Naive thymus-derived CD4-positive, alpha-beta T cell (primary cell): ENCODE measurements at regions of chr5 and their contacts with region 1.

Region 1: DNA sequence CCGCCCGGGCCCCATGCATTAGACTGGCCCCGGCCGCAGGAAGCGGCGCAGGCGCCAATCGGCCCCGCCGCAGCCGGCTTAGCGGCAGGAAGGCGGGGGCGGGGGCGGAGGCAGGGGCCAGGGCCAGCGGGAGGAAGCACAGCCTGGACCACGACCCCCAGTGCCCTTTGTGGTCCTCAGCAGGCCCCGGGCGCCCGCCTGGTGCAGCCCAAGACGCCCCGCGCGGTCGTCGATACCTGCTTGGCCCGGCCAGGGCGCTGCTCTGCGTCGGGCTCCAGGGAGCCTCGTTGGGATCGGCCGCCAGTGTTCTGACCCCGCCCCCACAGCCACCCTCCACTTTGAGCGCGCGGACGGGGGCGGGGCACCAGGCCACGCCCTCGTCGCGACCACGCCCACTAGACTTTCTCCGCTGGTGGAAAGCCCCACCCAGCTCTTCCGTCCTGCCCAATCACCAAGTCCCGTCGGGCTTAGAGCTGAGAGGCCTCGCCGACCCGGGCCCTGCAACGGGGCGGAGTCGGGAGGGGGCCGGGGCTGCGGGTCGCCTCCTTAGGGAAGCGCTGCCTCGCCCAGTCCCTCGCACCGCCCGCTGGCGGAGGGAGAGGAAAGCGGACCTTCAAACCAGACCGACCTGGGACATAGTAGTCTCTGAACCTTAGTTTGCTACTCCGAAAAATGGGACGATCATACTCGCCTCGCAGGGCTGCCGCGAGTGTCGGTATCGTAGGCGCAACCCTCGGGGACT is at the start of gene PDLIM7:
- DNase-seq: peak; percentile 88 to 97 (median 92)
- ATAC-seq: peak; percentile 92
- H3K4me3 ChIP-seq: peak within 1 kb of the TSS; percentile 77
- H3K4me3 Mint-ChIP-seq: peak within 1 kb of the TSS; percentile 77 to 90 (median 84)
- H3K27ac ChIP-seq: peak within 1 kb of the TSS; percentile 61
- H3K27ac Mint-ChIP-seq: peak within 1 kb of the TSS; percentile 28 to 77 (median 66)
- H3K4me1 ChIP-seq: peaks cover 7 to 10% of the 10 kb centered on the region in 2 donors
- H3K4me1 Mint-ChIP-seq: peaks cover 24 to 44% (median 28%) of the 10 kb centered on the region in 7 donors
- H3K27me3 ChIP-seq: no peaks in the 10 kb centered on the region
- H3K27me3 Mint-ChIP-seq: peaks cover 0 to 24% (median 0%) of the 10 kb centered on the region in 5 donors
- total RNA-seq, gene PDLIM7: 4.1 to 63.2 (median 11.9) TPM

Region 2: GRCh38 chr5:177133091-177133852 is 364.2 kb before region 1 on chr5 and contains the start of gene NSD1:
- CTCF ChIA-PET with region 1: no interaction called
- POLR2A ChIA-PET with region 1: no interaction called
- intact Hi-C with region 1: loop called in 1 of 2 experiments (anchors 5 kb)
- DNase-seq: peak; percentile 86 to 94 (median 93)
- ATAC-seq: peak; percentile 89
- H3K4me3 ChIP-seq: peak within 1 kb of the TSS; percentile 61
- H3K4me3 Mint-ChIP-seq: peak within 1 kb of the TSS; percentile 60 to 88 (median 85)
- H3K27ac ChIP-seq: peak within 1 kb of the TSS; percentile 80
- H3K27ac Mint-ChIP-seq: peak within 1 kb of the TSS; percentile 48 to 95 (median 89)
- H3K4me1 ChIP-seq: peaks cover 47 to 57% of the 10 kb centered on the region in 2 donors
- H3K4me1 Mint-ChIP-seq: peaks cover 34 to 72% (median 65%) of the 10 kb centered on the region in 7 donors
- H3K27me3 ChIP-seq: no peaks in the 10 kb centered on the region
- H3K27me3 Mint-ChIP-seq: no peaks in the 10 kb centered on the region
- total RNA-seq, gene NSD1: 105 to 126 (median 117) TPM

Region 3: GRCh38 chr5:177317959-177318377 is 179.5 kb before region 1 on chr5:
- CTCF ChIA-PET with region 1: interaction called, 8 read pairs
- POLR2A ChIA-PET with region 1: no interaction called
- intact Hi-C with region 1: loop called (anchors 1 kb)
- DNase-seq: peak; percentile 41 to 73 (median 69)
- ATAC-seq: peak; percentile 84
- H3K4me3 ChIP-seq: no peak overlapping the region
- H3K4me3 Mint-ChIP-seq: no peak overlapping the region
- H3K27ac ChIP-seq: no peak overlapping the region
- H3K27ac Mint-ChIP-seq: peak overlapping the region in 2 of 9 donors; percentile 32 to 37
- H3K4me1 ChIP-seq: peaks cover 1% of the 10 kb centered on the region in 2 donors
- H3K4me1 Mint-ChIP-seq: peaks cover 0 to 49% (median 20%) of the 10 kb centered on the region in 7 donors
- H3K27me3 ChIP-seq: no peaks in the 10 kb centered on the region
- H3K27me3 Mint-ChIP-seq: no peaks in the 10 kb centered on the region

Region 4: DNA sequence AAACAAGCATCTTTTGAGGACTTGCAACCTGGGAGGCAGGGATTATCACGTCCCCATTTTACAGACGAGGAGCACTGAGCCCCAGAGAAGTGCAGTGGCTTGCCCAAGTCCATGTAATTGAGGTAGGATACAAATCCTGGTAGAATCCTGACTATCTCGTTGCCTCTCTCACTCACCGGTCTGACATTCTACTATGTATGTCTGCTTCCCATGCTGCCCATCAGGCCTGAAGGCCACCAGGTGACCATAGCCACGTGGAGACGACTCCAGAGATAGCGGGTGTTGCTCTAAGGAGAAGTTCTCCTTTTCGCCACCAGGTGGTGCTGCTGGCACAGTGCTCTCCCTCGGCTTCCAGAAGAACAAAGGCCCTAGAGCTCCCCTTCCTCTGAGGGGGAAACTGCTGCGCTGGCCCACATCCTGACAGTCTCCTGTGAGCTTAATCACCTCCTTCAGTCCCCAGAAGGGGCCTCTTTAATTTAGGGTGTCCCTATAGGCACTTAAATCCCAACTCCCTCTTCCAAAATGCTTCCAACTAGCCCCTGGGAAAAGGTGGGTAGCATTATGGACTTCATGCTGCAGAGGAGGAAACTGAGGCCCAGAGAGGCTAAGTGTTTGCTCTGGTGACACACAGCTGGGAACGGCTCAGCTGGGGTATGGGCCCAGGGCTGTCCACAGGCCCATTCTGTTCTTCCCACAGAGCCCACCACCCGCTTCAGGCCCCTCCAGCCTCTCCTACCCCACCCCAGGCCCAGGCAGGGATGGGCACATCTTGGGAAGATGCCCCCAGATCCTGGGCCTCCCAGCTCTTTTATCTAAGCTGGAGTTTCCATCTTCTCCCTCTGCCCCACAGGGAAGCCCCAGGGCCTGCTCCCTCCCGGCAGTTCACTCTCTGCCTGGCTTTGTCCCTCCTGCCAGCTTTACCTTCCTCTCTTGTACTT is 106.8 kb before region 1 on chr5:
- CTCF ChIA-PET with region 1: interaction called, 77 read pairs
- POLR2A ChIA-PET with region 1: interaction called, 12 read pairs
- intact Hi-C with region 1: loop called (anchors 1 kb)
- DNase-seq: peak; percentile 76 to 91 (median 88)
- ATAC-seq: peak; percentile 89
- H3K4me3 ChIP-seq: no peak overlapping the region
- H3K4me3 Mint-ChIP-seq: peak overlapping the region in 9 of 10 donors; percentile 29 to 68 (median 53)
- H3K27ac ChIP-seq: peak overlapping the region; percentile 63
- H3K27ac Mint-ChIP-seq: peak overlapping the region in 8 of 9 donors; percentile 65 to 86 (median 78)
- H3K4me1 ChIP-seq: peaks cover 31 to 33% of the 10 kb centered on the region in 2 donors
- H3K4me1 Mint-ChIP-seq: peaks cover 30 to 39% (median 34%) of the 10 kb centered on the region in 7 donors
- H3K27me3 ChIP-seq: no peaks in the 10 kb centered on the region
- H3K27me3 Mint-ChIP-seq: peaks cover 0 to 6% (median 0%) of the 10 kb centered on the region in 5 donors

Region 5: DNA sequence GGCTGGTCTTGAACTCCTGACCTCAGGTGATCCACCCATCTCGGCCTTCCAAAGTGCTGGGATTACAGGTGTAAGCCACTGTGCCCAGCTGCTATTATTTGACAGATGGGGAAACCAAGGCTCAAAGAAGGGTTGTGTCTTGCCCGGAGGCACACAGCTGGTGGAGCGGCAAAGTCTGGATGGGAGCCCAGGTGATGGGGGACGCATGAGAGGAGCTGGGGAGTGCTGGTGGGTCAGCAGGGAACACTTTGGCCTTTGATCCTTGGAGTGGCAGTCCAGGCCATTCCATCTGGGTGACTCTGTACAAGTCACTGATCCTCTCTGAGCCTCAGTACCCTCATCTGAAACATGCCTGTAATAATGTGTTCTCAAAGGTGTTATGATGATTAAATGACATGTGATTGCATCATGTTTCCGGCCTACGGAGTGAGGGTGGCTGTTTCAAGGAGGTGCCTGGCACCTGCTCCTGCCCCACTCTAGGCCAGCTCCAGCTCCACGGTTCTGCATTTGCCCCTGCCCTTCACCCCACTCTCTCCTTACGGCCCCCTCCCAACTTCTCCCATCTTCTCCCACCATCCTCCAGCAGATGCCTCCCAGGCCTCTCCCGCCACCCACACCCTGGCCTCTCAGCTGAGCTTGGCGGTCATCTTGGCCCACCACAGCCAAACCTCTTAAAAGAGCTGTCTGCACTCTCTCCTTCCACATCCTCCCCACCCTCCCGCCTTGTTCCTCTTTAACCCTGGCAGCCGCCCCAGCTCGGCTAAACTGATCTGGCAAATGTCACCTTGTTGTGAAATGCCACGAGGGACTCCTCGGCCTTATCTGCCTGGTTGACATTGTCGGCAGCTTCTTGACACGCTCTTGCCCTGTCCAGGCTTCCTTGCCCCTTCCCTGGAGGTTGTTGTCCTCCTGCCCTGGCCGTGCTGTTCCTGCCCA is 18.5 kb before region 1 on chr5:
- CTCF ChIA-PET with region 1: interaction called, 7 read pairs
- POLR2A ChIA-PET with region 1: interaction called, 5 read pairs
- intact Hi-C with region 1: loop called in 1 of 2 experiments (anchors 1 kb)
- DNase-seq: peak in 5 of 9 donors; percentile 26 to 48 (median 33)
- ATAC-seq: peak; percentile 80
- H3K4me3 ChIP-seq: no peak overlapping the region
- H3K4me3 Mint-ChIP-seq: peak overlapping the region in 8 of 10 donors; percentile 7 to 62 (median 32)
- H3K27ac ChIP-seq: peak overlapping the region; percentile 41
- H3K27ac Mint-ChIP-seq: peak overlapping the region; percentile 82 to 95 (median 90)
- H3K4me1 ChIP-seq: peaks cover 0 to 24% of the 10 kb centered on the region in 2 donors
- H3K4me1 Mint-ChIP-seq: peaks cover 29 to 47% (median 42%) of the 10 kb centered on the region in 7 donors
- H3K27me3 ChIP-seq: no peaks in the 10 kb centered on the region
- H3K27me3 Mint-ChIP-seq: peaks cover 0 to 7% (median 0%) of the 10 kb centered on the region in 5 donors

Region 6: GRCh38 chr5:177554474-177555111 is 57.1 kb after region 1 on chr5 and contains the start of gene FAM193B:
- CTCF ChIA-PET with region 1: no interaction called
- POLR2A ChIA-PET with region 1: no interaction called
- intact Hi-C with region 1: loop called in 1 of 2 experiments (anchors 1 kb)
- DNase-seq: peak; percentile 93 to 96 (median 95)
- ATAC-seq: peak; percentile 99
- H3K4me3 ChIP-seq: peak within 1 kb of the TSS; percentile 68
- H3K4me3 Mint-ChIP-seq: peak within 1 kb of the TSS; percentile 81 to 92 (median 88)
- H3K27ac ChIP-seq: peak within 1 kb of the TSS; percentile 73
- H3K27ac Mint-ChIP-seq: peak within 1 kb of the TSS; percentile 63 to 90 (median 85)
- H3K4me1 ChIP-seq: peaks cover 10 to 17% of the 10 kb centered on the region in 2 donors
- H3K4me1 Mint-ChIP-seq: peaks cover 24 to 43% (median 35%) of the 10 kb centered on the region in 7 donors
- H3K27me3 ChIP-seq: no peaks in the 10 kb centered on the region
- H3K27me3 Mint-ChIP-seq: peaks cover 0 to 4% (median 0%) of the 10 kb centered on the region in 5 donors
- total RNA-seq, gene FAM193B: 102 to 275 (median 175) TPM

Region 7: DNA sequence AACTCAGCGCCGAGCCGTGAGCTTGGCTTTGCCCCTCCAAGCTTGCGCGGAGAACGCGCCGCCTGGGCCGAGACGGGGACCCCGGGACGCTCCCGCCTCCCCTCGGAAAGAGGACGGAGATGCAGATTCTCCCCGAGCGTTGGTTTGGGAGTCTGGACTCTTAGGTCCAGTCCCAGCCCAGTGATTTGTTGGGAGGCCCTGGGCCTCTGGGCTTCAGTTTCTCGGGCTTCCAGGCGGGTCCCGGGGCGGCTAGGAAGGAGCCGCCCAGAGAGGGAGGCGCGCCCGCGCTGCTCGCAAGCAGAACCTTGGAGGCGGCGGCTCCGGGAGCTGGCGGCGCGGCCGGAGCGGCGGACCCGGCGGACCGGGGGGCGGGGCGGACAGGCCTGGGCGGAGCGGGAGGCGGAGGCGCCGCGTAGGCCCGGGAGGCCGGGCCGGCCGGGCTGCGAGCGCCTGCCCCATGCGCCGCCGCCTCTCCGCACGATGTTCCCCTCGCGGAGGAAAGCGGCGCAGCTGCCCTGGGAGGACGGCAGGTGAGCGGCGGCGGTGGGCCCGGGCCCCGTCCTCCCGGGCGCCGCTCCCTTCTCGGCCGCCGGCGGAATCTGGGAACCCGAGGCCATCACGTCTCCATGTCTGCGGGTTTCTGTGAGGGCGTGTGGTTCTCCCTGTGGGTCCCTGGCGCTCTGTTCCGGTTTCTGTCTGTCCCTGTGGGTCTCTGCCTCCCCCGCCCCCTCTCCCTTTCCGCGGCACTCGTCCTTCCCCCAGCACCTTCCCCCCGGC is 102.5 kb after region 1 on chr5 and contains the start of gene B4GALT7:
- CTCF ChIA-PET with region 1: no interaction called
- POLR2A ChIA-PET with region 1: no interaction called
- intact Hi-C with region 1: no loop called
- DNase-seq: peak; percentile 67 to 95 (median 84)
- ATAC-seq: peak; percentile 97
- H3K4me3 ChIP-seq: peak within 1 kb of the TSS; percentile 92
- H3K4me3 Mint-ChIP-seq: peak within 1 kb of the TSS; percentile 88 to 99 (median 96)
- H3K27ac ChIP-seq: peak within 1 kb of the TSS; percentile 78
- H3K27ac Mint-ChIP-seq: peak within 1 kb of the TSS; percentile 86 to 96 (median 90)
- H3K4me1 ChIP-seq: peaks cover 4 to 12% of the 10 kb centered on the region in 2 donors
- H3K4me1 Mint-ChIP-seq: peaks cover 27 to 44% (median 32%) of the 10 kb centered on the region in 7 donors
- H3K27me3 ChIP-seq: no peaks in the 10 kb centered on the region
- H3K27me3 Mint-ChIP-seq: no peaks in the 10 kb centered on the region
- total RNA-seq, gene B4GALT7: 25.4 to 42.2 (median 32.1) TPM